Aorta (tissue), 5 donors: ENCODE measurements at regions of chr9 and their contacts with region 1.

Region 1: GRCh38 chr9:123401879-123402513 is 46.0 kb downstream of the CRB2 start:
- DNase-seq: no peak
- ATAC-seq: peak; percentile 88
- H3K4me3 ChIP-seq: no peak overlapping the region
- H3K27ac ChIP-seq: no peak overlapping the region
- H3K4me1 ChIP-seq: no peaks in the 10 kb centered on the region
- H3K27me3 ChIP-seq: no peaks in the 10 kb centered on the region

Region 2: GRCh38 chr9:123851851-123852250 is 449.9 kb after region 1 on chr9:
- intact Hi-C with region 1: no loop called
- DNase-seq: no peak
- ATAC-seq: no peak
- H3K4me3 ChIP-seq: no peak overlapping the region
- H3K27ac ChIP-seq: no peak overlapping the region
- H3K4me1 ChIP-seq: no peaks in the 10 kb centered on the region
- H3K27me3 ChIP-seq: no peaks in the 10 kb centered on the region

Region 3: DNA sequence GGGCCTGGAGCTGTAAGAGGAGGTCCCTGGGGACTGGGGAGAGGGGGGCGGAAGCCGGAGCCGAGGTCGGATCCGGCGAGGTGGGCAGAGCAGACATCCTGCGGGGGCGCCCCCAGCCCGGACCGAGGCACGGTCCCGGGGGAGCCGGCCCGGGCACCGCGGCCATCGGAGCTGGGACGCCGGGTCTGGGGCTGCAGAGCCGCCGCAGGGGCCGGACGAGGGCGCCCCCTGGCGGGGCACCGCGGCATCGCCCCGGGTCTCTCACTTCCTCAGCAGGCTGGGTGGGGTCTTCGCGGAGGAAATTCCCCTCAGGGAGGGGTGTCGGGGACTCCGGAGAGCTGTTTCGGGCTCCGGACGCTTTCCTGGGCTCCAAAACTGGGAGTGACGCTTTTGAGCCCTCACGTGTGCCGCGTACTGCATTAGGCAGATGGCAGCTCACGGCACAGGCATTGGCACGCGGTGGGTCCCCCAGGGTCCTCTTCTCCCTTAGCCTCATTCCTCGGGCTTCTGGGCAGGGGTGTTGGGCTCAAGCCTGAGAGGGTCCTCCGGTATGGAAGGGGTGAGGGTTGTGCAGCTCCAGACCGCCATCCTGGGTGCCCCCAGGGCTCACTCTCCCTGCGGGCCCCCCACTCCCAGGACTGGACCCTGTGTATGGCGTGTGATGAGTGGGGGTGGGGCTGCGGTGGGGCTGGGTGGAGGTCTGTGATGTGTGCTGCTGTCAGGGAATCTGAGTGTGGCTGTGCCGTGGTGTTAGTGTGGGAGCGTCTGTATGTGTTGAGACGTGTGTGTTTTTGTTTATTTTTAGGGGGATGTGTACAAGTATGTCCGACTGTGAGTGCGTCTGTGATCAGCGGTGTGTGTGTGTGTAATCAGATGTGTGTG is 639.2 kb after region 1 on chr9:
- intact Hi-C with region 1: loop called (anchors 5 kb)
- DNase-seq: peak; percentile 60 to 84
- ATAC-seq: peak; percentile 76
- H3K4me3 ChIP-seq: no peak overlapping the region
- H3K27ac ChIP-seq: no peak overlapping the region
- H3K4me1 ChIP-seq: no peaks in the 10 kb centered on the region
- H3K27me3 ChIP-seq: no peaks in the 10 kb centered on the region